Posterior cingulate gyrus (tissue), 11 donors: ENCODE measurements at regions of chr1 and their contacts with region 1.

Region 1: GRCh38 chr1:20361806-20362640 is 71.3 kb downstream of the VWA5B1 start:
- DNase-seq: peak; percentile 73 to 97 (median 90)

Region 2: GRCh38 chr1:20212685-20213331 is 149.2 kb before region 1 on chr1:
- intact Hi-C with region 1: loop called (anchors 10 kb)
- DNase-seq: peak; percentile 41 to 95 (median 64)

Region 3: GRCh38 chr1:20430355-20431175 is 68.5 kb after region 1 on chr1:
- intact Hi-C with region 1: loop called (anchors 5 kb)
- DNase-seq: peak in 7 of 10 donors; percentile 44 to 91 (median 58)